Left cardiac atrium (tissue), 4 donors: ENCODE measurements at regions of chr11 and their contacts with region 1.

Region 1: GRCh38 chr11:109946322-109946846 is 146.8 kb upstream of the ZC3H12C start:
- DNase-seq: peak; percentile 90
- ATAC-seq: peak; percentile 98 to 100

Region 2: DNA sequence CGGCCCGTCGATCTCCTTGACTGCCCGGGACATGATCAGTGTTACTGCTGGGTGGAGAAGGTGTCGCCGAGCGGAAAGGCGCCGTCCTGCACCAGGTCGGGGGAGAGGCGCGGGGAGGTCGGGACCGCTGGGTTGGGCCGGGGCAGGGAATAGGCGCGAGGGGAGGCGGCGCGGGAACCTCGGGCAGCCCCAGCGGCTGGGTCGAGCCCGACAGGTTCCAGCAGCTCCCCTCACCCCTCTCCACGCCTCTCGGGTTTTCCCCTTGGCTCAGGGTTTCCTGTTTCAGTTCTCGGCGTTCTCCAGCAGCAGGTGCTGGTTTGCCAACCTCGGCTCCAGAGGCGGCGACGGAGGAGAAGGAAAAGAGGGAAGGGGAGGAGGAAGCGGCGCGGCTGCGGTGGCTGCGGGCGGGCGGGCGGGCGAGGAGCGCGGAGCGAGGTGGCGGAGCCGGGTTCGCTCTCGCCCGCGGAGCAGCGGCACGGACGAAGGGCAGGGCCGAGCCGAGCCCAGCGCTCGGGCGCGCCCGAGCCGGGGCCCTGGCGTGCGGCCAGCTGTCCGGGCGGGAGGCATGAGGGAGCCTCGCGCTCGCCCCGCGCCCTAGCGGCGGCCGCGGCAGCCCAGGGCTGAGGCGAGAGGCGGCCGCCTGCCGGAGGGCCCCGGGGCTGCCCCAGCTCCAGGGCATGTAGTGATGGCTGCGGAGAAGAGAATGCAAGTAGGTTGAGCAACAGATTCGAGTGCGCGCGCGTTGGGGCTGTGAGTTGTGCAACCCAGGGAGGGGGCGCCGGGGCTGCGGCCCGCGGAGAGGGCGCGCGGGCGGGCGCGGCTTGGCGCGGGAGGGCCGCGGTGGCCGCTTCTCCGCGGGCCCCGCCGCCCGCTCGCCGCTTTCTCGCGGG is 146.4 kb after region 1 on chr11 and contains the start of gene ZC3H12C:
- intact Hi-C with region 1: loop called in 1 of 2 experiments (anchors 2 kb)
- DNase-seq: peak; percentile 85
- ATAC-seq: peak; percentile 85 to 94
- total RNA-seq, gene ZC3H12C: 12.5 to 18.7 TPM

Region 3: DNA sequence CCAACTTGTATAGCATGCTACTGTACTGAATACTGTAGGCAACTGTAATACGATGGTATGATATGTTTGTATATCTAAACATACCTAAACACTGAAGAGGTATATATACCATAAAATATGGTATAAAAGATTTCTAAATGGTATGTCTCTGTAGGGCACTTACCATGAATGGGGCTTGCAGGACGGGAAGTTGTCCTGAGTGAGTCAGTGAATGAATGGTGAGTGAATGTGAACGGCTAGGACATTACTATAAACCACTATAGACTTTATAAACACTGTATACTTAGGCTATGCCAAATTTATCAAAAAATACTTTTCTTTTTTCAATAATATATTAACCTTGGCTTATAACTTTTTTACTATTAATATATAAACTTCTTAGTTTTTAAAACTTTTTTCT is 213.6 kb after region 1 on chr11:
- intact Hi-C with region 1: loop called in 1 of 2 experiments (anchors 10 kb)
- DNase-seq: no peak
- ATAC-seq: no peak